ENCODE measurements at regions of chr9 and their contacts with region 1.

Region 1: DNA sequence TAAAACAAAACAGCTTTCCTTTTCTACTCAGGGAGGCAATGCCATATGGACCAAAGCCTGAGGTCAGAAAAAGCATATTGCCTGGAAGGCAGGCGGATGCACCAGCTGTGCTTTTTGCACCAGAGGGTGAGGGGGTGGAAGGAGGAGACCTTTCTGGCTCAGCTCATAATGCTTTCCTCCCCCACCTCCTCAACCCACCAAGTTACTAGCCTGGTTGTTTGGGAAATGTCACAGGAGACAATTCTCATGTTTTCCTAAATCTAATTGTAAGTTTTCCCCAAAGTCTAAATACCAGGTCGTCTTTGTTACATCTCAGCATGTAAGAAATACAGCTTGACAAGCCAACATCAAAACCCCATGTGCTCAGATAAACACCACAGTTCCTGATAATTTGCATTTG is 72.6 kb upstream of the DMRTA1 start:
- DNase-seq: no peak
- ATAC-seq: no peak
- H3K4me3 ChIP-seq: no peak overlapping the region
- H3K27ac ChIP-seq: no peak overlapping the region
- H3K4me1 ChIP-seq: no peaks in the 10 kb centered on the region
- H3K27me3 ChIP-seq: no peaks in the 10 kb centered on the region
- CTCF ChIP-seq: no peak
- POLR2A ChIP-seq: no peak

Region 2: DNA sequence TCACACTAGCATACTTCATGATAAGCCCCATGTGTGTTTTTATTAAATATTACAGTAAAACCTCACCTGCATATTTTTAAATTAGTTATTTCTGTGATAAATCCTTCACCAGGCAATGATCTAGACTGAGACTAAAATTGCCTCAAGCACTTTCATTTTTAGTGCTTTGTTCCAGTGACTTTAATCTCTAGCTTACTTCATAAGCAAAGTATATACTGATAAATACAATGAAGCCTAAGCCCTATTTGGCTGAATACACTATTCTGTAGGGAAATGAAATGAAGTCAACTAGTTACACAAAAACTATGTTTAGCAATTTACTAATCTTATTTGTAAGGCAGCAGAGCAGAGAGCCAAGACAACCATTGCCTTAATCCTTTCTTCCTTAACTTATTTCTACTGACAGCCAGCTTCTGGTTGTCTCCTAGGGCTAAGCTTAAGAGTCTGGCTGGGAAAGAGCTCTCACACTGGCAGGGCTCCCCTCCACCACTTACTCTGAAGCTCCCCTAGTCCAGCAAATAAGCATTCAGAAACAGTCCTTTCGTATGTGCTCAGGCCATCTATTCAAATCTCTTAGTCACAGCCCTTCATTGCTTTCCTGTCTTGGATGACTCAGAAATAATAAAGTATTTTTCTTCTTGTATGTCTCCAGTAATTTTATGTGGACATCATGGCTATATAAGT is 603.0 kb before region 1 on chr9:
- in situ Hi-C with region 1: no loop called
- intact Hi-C with region 1: no loop called
- DNase-seq: no peak
- ATAC-seq: no peak
- H3K4me3 ChIP-seq: no peak overlapping the region
- H3K27ac ChIP-seq: no peak overlapping the region
- H3K4me1 ChIP-seq: no peaks in the 10 kb centered on the region
- H3K27me3 ChIP-seq: no peaks in the 10 kb centered on the region
- CTCF ChIP-seq: no peak
- POLR2A ChIP-seq: no peak

Region 3: DNA sequence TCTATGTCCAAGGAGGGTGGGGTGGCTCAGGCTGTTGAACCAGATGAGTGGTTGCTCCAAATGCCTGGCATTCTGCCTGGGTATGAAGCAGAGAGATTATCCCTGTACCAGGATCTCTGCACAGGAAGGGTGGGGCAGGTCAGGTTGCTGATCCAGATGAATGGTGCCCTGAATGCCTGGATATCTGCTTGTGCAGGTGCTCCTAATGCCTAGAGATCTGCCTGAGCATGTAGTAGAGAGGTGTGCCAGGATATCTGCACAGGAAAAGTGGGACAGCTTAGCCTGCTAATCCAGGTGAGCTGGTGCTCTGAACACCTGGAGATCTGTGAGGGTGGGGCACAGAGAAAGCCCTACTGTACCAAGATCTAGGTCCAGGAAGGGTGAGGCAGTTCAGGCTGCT is 117.0 kb before region 1 on chr9:
- in situ Hi-C with region 1: loop called in 1 of 4 experiments (anchors 25 kb)
- intact Hi-C with region 1: no loop called
- DNase-seq: no peak
- ATAC-seq: no peak
- H3K4me3 ChIP-seq: no peak overlapping the region
- H3K27ac ChIP-seq: no peak overlapping the region
- H3K4me1 ChIP-seq: no peaks in the 10 kb centered on the region
- H3K27me3 ChIP-seq: no peaks in the 10 kb centered on the region
- CTCF ChIP-seq: no peak
- POLR2A ChIP-seq: no peak

Region 4: DNA sequence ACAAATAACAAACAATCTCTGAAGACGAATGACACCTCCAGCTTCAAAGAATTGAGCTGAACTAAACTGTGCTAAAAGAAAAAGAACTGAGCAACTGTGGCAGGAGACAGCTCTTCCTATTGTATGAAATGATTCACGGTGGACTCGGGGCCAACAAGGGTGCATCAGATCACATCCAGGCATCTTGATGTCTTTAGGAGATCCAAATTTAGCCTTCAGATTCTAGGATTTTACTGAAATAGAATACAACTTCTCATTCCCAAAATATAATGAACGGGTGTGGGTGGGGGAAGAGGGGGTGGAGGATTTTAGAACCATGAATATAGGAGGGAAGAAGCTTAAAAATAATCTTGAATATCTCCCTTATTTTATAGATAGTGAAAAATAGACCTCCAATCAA is 820.2 kb after region 1 on chr9:
- in situ Hi-C with region 1: no loop called
- intact Hi-C with region 1: no loop called
- DNase-seq: no peak
- ATAC-seq: no peak
- H3K4me3 ChIP-seq: no peak overlapping the region
- H3K27ac ChIP-seq: no peak overlapping the region
- H3K4me1 ChIP-seq: no peaks in the 10 kb centered on the region
- H3K27me3 ChIP-seq: no peaks in the 10 kb centered on the region
- CTCF ChIP-seq: no peak
- POLR2A ChIP-seq: no peak